Head of caudate nucleus (tissue), 42 donors: ENCODE measurements at regions of chr15 and their contacts with region 1.

Region 1: DNA sequence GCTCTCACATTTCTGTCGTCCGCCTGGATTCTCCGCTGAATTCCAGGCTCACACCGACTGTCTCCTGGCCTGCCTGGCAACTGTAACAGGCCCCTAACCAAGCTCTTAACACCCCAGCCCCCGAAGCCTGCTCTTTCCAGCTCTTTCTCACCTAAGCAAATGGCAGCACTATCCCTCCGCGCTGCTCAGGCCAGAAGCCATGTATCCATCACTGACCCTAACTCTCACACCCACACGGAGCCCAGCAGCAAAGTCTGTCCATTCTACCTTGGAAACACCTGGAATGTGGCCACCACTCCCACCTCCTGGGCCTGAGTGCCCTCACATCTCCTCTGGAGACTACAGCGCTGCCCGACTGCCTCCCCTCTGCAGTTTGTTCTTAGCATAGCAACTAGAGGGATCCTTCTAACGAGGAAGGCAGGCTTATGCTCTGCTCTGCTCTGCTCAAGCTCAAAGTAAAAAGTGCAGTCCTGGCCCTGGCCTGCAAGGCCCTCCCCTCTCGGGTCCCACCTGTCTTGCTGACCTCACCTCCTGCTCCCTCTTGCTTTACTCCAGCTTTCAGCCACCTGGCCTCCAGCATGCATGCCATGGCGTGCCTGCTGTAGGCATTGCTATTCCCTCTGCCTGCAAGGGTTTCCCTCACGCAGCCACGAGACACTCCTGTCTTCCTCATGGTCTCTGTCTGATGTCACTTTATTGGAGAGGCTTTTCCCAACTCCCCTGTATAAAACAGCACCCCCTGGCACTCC is 27.2 kb downstream of the FEM1B start:
- DNase-seq: peak in 7 of 42 donors; percentile 7 to 25 (median 11)

Region 2: GRCh38 chr15:68249058-68249713 is 55.6 kb before region 1 on chr15:
- intact Hi-C with region 1: loop called (anchors 2 kb)
- DNase-seq: no peak

Region 3: GRCh38 chr15:68259883-68260282 is 44.9 kb before region 1 on chr15:
- intact Hi-C with region 1: no loop called
- DNase-seq: no peak

Region 4: GRCh38 chr15:68365140-68365745 is 60.5 kb after region 1 on chr15:
- intact Hi-C with region 1: loop called (anchors 10 kb)
- DNase-seq: peak in 1 of 42 donors; percentile 3

Region 5: DNA sequence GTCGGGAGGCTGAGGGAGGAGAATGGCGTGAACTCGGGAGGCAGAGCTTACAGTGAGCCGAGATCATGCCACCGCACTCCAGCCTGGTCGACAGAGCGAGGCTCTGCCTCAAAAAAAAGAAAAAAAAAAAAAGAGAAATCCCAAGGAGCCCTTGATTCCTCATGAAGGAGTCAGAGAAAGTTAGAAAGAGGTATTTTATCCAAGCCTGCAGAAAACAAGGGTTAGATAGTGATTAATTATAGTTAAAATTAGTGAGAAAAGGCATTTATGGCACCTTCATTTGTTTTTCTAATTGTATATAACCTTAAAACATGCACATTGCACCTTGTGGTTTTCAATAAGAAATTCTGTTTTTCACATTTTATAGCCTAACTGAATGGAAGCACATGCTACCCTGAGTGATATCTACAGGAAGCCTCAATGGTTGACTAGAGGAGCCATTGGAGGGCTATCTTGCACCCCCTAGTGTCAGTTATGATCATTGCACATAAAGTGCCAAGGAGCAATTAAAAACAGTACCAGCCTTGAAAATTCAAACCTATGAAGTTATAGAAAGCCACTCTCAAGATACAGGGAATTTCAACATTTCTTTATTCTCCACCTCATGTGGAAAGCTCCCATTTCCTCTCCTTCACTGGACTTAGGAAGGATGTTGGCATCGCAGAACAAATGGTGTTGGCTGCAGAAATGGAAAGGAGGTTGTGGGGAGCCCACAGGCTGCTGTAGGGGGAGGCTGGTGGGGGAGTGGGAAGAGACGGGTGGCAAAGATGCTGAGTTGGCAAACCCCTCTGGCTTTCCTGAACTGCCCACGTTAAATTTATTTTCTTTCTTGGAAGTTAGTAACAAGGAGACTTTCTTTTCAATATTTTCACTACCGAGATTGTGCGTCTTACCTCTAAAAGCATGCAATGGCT is 78.7 kb after region 1 on chr15:
- intact Hi-C with region 1: loop called (anchors 5 kb)
- DNase-seq: peak in 15 of 42 donors; percentile 6 to 73 (median 32)

Region 6: GRCh38 chr15:68441045-68441743 is 136.4 kb after region 1 on chr15:
- intact Hi-C with region 1: no loop called
- DNase-seq: no peak

Region 7: DNA sequence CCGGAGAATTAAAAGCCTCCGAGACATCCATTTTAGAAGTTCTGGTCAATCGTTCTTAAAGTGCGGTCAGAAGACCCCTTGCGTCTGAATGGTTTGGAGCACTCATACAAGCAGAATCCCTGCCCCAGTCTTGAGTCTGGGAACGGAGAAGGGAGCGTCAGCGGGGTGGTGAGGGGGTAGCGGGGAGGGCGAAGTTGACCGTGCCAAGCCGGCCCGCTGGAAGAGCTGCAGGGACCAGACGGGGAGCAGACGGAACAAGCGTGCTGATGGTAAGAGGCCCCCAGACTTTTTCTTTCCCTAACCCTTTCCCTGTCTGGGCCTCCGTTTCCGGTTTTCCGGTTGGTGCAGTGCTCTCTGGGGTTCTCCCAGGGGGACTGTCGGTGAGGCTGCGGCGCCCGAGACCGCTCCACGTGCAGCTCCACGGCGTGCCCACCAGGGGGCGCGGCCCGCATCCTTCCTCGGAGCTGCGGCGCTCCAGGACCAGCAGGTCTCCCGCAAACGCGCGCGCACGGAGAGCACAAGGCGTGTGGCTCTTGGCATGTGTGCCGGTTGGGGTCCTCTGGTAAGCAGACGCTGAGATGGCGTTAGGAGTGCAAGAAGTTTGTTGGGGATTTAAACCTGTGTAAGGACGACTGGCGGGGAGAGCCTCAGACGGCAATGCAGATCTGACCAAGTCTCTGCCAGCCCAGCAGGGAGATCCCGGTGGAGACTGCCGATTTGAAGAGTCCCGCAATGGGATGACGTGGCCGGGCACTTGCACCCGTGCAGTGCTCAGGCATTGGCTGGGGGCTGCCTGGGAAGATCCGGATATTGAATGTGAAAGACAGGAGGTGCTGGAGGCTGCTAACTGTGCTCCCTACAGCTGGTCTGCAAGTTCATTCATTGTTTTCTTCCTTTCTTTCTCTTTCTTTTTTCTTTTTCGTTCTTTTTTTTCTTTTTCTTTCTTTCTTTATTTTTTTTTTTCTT is 254.9 kb after region 1 on chr15:
- intact Hi-C with region 1: no loop called
- DNase-seq: peak; percentile 72 to 94 (median 86)

Region 8: DNA sequence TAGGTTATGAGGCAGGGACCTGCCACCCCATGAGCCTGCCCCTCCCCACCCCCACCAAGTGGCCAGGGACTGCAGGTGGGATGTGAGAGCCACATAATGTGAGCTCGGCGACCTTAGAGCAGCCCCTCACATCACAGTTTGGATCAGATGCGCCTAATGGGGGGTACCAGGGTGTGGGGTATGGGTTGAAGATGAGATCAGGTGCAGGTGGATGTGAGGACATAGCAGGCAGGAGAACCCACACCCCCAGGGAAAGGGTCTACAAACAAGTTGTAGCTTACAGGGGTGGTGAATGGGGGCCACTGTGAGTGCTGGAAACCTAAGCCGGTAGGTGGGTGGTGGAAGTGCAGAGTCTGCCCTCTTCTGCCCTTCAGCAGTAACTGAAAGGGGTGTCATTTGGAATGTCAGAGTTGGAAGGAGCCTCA is 368.0 kb after region 1 on chr15:
- intact Hi-C with region 1: loop called (anchors 10 kb)
- DNase-seq: peak in 17 of 42 donors; percentile 12 to 63 (median 42)

Region 9: DNA sequence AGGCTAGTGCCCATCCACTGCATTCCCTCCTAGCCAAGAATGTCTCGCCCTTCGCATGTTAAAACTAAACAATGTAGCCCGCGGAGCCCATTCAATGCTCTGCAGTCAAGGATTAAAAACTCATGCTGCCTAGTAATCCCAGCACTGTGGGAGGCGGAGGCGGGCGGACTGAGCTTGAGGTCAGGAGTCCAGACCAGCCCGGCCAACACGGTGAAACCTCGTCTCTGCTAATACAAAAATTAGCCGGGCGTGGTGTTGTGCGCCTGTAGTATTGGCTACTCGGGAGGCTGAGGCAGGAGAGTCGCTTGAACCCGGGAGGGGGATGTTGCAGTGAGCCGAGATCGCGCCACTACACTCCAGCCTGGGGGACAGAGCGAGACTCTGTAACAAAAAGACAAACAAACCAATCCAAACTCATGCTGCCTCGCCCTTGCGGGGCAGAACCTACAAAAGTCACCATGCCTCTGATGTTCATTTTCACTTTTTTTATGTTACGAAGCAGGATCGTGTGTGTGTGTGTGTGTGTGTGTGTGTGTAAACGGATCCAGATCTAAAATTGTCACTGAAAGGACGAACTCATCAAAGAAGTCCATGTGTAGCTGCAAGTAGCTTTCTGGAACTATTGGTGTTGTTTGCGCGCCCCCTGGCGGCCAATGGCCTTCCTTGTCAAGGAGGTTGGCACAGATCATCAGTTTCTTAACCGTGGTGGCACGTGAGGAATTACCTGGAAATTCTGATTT is 570.8 kb after region 1 on chr15:
- intact Hi-C with region 1: loop called (anchors 5 kb)
- DNase-seq: peak; percentile 83 to 98 (median 94)